ENCODE measurements at regions of chr6 and their contacts with region 1.

Region 1: GRCh38 chr6:85460921-85461797 is 11.3 kb downstream of the NT5E start:
- DNase-seq: peak; percentile 64
- H3K4me3 Mint-ChIP-seq: peak overlapping the region; percentile 57
- H3K27ac Mint-ChIP-seq: peak overlapping the region; percentile 89
- H3K4me1 Mint-ChIP-seq: peaks cover 98% of the 10 kb centered on the region
- H3K27me3 Mint-ChIP-seq: no peaks in the 10 kb centered on the region

Region 2: DNA sequence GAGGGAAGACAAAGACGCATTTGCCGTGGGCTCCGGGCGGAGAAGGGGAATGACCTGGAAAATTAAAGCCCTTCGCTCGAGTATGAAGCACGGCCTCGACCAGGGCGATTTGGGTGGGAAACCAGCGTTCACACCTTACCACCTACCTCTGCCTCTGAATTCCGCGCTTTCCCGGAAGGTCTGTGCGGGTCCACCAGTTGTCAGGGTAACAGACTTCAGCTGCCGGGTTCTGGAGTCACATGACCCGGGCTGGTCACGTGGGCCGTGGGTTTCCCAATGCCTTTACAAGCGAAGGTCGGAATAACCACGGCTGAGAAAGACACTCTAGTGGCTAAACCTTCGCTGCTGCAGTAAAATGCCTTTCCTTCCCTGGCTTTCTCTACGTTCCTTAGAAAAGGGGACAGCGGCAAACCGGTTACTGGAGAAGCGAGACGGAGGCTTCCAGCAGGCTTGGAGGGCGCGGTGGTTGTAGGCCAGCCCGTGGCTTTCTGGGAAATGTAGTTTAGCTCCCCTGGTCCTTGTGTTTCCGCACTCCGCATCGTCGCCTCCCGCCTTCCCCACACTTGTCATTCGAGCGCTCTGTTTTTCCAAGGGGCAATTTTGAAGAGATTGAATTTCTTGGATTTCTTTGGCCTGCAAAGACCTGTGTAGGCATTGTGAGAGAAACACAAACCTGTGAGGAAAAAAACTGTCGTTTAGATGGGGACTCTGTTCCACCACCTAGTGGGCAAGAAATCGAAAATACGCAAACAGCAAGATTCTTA is 1233.5 kb before region 1 on chr6 and contains the start of gene CEP162:
- intact Hi-C with region 1: loop called (anchors 5 kb)
- DNase-seq: peak; percentile 83
- H3K4me3 Mint-ChIP-seq: peak within 1 kb of the TSS; percentile 98
- H3K27ac Mint-ChIP-seq: peak within 1 kb of the TSS; percentile 86
- H3K4me1 Mint-ChIP-seq: peaks cover 10% of the 10 kb centered on the region
- H3K27me3 Mint-ChIP-seq: peaks cover 5% of the 10 kb centered on the region
- total RNA-seq, gene CEP162: 4.7 and 6.1 TPM in 2 replicates

Region 3: DNA sequence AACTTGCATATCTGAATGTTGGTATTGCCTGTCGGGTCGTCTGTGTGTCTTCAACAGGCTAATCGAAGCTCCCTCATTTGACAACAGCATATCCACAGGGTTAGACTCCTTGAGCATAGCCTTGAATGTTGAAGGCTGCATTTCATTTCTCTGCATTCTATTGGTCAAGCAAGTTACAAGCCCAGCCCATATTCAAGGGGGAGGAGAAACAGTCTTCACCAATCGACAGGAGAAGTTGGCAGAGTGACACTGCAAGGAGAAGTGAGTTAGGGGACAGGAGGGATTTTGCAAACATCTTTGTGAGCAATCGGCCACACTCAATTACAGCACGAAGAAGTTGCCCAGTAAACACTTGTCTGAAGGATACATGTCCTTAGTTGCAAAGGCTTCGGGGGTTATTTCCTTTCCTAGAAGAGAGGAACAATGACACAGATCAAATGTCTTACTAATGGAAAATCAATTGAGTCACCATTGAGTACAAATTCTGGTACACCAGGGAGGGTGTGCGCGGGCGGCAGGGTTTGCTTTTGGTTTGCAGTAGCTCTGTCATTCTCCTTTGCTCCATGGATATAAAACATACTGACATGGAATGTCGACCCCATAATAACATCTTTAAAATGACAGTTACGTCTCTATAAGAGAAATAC is 71.9 kb before region 1 on chr6:
- intact Hi-C with region 1: loop called (anchors 1 kb)
- DNase-seq: no peak
- H3K4me3 Mint-ChIP-seq: peak overlapping the region; percentile 3
- H3K27ac Mint-ChIP-seq: peak overlapping the region; percentile 36
- H3K4me1 Mint-ChIP-seq: peaks cover 34% of the 10 kb centered on the region
- H3K27me3 Mint-ChIP-seq: peaks cover 5% of the 10 kb centered on the region

Region 4: GRCh38 chr6:85449818-85450759 is 11.1 kb before region 1 on chr6 and contains the start of gene NT5E:
- intact Hi-C with region 1: loop called (anchors 1 kb)
- DNase-seq: peak; percentile 37
- H3K4me3 Mint-ChIP-seq: peak within 1 kb of the TSS; percentile 98
- H3K27ac Mint-ChIP-seq: peak within 1 kb of the TSS; percentile 89
- H3K4me1 Mint-ChIP-seq: peaks cover 66% of the 10 kb centered on the region
- H3K27me3 Mint-ChIP-seq: peaks cover 31% of the 10 kb centered on the region
- total RNA-seq, gene NT5E: 12.5 and 15.2 TPM in 2 replicates

Region 5: DNA sequence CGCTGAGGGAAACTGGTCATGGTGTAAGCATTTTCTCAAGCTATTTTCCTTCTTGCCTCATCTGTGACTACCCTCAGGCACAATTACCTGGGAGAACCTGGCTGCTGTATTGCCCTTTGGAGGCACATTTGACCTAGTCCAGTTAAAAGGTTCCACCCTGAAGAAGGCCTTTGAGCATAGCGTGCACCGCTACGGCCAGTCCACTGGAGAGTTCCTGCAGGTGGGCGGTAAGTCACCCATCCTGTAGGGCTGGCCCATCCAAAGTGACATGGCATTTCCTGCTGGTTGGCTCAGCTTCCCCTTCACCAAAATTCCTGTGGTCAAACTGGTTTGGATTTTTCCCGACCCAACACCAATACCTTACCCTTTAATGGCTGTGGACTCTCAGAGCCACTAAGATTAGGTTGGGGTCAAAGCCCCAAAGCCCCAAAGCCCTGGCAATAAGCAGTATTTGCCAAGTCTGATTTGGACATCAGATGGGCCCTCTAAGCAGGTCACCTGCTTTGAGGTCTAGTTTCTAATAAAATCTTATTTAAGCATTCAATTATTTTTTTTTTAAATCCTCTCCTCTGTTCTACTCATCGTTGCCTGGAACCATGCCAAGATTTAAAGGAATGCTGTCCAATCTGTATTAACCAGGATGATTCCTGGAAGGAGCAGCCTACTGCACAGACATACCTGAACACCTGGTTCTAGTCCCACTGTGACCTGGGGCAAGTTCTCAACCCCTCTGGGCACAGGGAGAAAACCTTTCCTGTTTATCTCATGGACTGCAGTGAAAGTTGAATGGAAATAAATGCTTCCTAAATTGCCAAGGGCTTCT is 29.5 kb after region 1 on chr6:
- intact Hi-C with region 1: no loop called
- DNase-seq: no peak
- H3K4me3 Mint-ChIP-seq: no peak overlapping the region
- H3K27ac Mint-ChIP-seq: no peak overlapping the region
- H3K4me1 Mint-ChIP-seq: no peaks in the 10 kb centered on the region
- H3K27me3 Mint-ChIP-seq: no peaks in the 10 kb centered on the region

Region 6: GRCh38 chr6:85593438-85594196 is 132.5 kb after region 1 on chr6 and contains the start of gene SNX14:
- intact Hi-C with region 1: loop called (anchors 1 kb)
- DNase-seq: peak; percentile 74
- H3K4me3 Mint-ChIP-seq: peak within 1 kb of the TSS; percentile 94
- H3K27ac Mint-ChIP-seq: peak within 1 kb of the TSS; percentile 93
- H3K4me1 Mint-ChIP-seq: peaks cover 14% of the 10 kb centered on the region
- H3K27me3 Mint-ChIP-seq: no peaks in the 10 kb centered on the region
- total RNA-seq, gene SNX14: 49.5 and 51.0 TPM in 2 replicates

Measured in activated T-helper 1 cell treated with anti-CD3 and anti-CD28 coated beads, Interleukin-12 subunit alpha, Interleukin-12 subunit beta, Interleukin-2, Interleukin-4 antibody, amounts not matched to agents 30 ng/mL and 10 ng/mL and 1 ng/mL, durations not matched to agents 14 hours and 24 hours and 36 hours (primary cell).